H1 (cell line): ENCODE measurements at regions of chr5 and their contacts with region 1.

Region 1: GRCh38 chr5:170434966-170435605 is 45.9 kb upstream of the KCNMB1 start:
- DNase-seq: peak; percentile 54 to 92
- H3K4me3 ChIP-seq: no peak overlapping the region
- H3K27ac ChIP-seq: no peak overlapping the region
- H3K4me1 ChIP-seq: peaks cover 0 to 17% (median 9%) of the 10 kb centered on the region in 4 experiments; a peak in 6 of 7 replicates
- H3K27me3 ChIP-seq: no peaks in the 10 kb centered on the region; a peak in 1 of 7 replicates
- CTCF ChIP-seq: peak; percentile 91 to 97 (median 97)
- EP300 ChIP-seq: no peak
- POLR2A ChIP-seq: no peak
- RAD21 ChIP-seq: peak; percentile 95 to 99

Region 2: DNA sequence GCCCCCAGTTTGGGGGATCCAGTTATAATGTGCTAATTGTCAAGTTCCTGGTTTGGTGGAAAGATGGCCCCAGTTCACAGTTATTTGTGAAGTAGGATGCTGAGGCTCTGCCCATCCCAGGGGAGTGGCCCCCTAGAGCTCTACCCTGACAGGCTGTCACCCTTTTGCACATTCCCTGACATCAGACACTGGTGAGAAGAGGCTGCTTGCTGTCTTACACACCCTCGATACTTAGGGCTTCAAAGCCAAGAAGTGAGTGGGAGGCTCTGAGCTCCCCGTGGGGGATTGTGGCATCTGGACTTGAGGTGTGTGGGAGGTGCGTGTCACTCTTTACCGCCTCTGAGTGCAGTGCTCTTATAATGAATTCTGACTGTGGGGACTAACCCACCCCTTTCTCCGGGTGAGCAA is 629.6 kb before region 1 on chr5:
- CTCF ChIA-PET with region 1: no interaction called
- POLR2A ChIA-PET with region 1: no interaction called
- DNase-seq: no peak
- H3K4me3 ChIP-seq: no peak overlapping the region
- H3K27ac ChIP-seq: no peak overlapping the region
- H3K4me1 ChIP-seq: peaks cover 0 to 20% (median 14%) of the 10 kb centered on the region in 4 experiments; a peak in 6 of 7 replicates
- H3K27me3 ChIP-seq: peaks cover 0 to 2% (median 0%) of the 10 kb centered on the region in 4 experiments; a peak in 1 of 7 replicates
- CTCF ChIP-seq: no peak
- EP300 ChIP-seq: no peak
- POLR2A ChIP-seq: no peak
- RAD21 ChIP-seq: no peak

Region 3: DNA sequence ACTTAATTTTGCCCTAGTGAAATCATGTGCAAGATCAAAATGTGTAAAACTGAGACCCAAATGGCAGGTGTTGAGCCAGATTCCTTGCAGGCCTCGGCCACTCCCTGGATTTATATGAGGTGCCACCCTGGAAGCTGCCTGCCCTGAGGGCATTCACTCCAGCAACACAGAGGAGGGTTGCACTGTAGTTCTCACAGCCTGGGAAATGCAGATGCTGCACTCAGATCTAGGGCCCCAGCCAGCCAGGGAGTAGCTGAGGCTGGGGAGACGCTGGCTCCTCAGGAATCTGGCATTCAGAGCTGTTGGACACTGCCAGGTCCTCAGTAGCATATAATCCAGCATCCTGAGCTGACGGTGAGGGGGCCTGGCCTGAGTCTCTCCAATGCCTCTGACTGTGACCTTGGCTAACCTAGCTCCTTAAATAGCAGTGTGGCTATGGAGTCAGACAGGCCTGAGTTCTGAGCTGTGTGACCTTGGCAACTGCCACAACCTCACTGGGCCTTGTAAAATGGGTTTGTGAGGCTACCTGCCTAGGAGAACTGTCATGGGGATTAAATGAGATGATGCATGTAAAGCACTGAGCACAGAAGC is 54.6 kb before region 1 on chr5:
- CTCF ChIA-PET with region 1: no interaction called
- POLR2A ChIA-PET with region 1: no interaction called
- DNase-seq: no peak
- H3K4me3 ChIP-seq: no peak overlapping the region
- H3K27ac ChIP-seq: no peak overlapping the region
- H3K4me1 ChIP-seq: no peaks in the 10 kb centered on the region
- H3K27me3 ChIP-seq: no peaks in the 10 kb centered on the region
- CTCF ChIP-seq: no peak
- EP300 ChIP-seq: no peak
- POLR2A ChIP-seq: no peak
- RAD21 ChIP-seq: no peak

Region 4: GRCh38 chr5:170475294-170476000 is 40.4 kb after region 1 on chr5:
- CTCF ChIA-PET with region 1: interaction called, 42 read pairs
- POLR2A ChIA-PET with region 1: no interaction called
- DNase-seq: no peak
- H3K4me3 ChIP-seq: no peak overlapping the region
- H3K27ac ChIP-seq: no peak overlapping the region
- H3K4me1 ChIP-seq: peaks cover 2 to 5% (median 3%) of the 10 kb centered on the region in 4 experiments; a peak in 5 of 7 replicates
- H3K27me3 ChIP-seq: no peaks in the 10 kb centered on the region; a peak in 1 of 7 replicates
- CTCF ChIP-seq: no peak
- EP300 ChIP-seq: no peak
- POLR2A ChIP-seq: no peak
- RAD21 ChIP-seq: no peak

Region 5: DNA sequence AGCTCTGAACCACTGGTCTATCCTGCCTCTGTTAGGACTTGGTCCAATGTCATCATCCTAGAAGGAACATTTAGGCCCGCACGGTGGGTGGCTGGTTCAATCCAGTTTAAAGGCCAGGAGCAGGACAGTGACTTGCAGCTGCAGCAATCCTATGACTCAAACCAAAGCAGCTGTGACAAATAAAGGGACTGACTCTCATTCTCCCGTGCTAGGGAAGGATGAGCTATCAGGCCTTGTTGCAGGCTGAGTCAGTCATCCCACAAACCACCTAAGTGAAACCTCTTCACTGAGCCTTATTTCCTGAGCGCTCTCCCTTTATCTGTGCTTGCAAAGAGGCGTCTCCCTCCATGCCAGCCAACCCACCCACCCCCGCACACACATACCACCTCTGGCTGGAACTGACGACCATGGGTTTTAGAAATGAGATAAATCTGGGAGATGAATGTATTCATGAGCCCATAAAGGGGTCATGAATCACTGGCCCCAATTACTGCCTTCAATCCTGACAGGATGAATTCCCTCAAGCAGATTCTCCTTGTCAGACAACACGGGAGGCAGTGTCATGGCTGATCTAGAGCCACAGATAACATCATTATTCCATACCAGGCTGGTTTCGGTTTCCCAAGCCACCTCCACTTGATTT is 162.1 kb after region 1 on chr5:
- CTCF ChIA-PET with region 1: interaction called, 22 read pairs
- POLR2A ChIA-PET with region 1: no interaction called
- DNase-seq: no peak
- H3K4me3 ChIP-seq: no peak overlapping the region
- H3K27ac ChIP-seq: no peak overlapping the region
- H3K4me1 ChIP-seq: peaks cover 0 to 2% (median 0%) of the 10 kb centered on the region in 4 experiments; a peak in 1 of 7 replicates
- H3K27me3 ChIP-seq: no peaks in the 10 kb centered on the region; a peak in 1 of 7 replicates
- CTCF ChIP-seq: no peak
- EP300 ChIP-seq: no peak
- POLR2A ChIP-seq: no peak
- RAD21 ChIP-seq: no peak

Region 6: DNA sequence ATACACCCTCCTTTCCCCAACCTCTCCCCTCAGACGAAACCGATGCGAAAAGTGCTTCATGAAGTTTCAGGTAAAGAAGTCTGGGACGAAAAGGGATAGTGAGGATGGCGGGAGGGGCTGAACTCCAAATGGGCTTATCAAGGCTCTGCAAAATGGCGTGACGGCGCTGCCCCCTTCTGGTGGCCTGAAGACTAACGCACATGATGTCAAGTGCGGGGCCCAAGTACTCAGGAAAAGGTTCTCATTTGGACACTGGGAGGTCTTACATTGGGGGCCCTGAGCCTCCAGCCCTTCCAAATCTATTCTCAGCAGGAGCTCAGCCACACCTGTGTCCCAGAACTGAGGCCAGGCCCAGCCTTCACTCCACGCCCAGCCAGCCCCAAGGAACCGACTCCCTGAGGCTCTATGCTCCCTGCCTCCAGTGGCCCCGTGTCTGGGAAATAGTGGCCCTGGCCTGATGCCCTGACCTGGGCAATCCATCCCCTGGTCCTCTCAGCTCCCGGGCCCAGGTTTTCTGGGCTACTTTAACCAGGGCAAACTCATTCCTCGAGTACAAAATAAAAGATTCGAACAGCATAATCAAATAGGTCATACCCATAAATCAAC is 188.6 kb after region 1 on chr5:
- CTCF ChIA-PET with region 1: interaction called, 160 read pairs
- POLR2A ChIA-PET with region 1: no interaction called
- DNase-seq: peak in 1 of 2 experiments; percentile 79
- H3K4me3 ChIP-seq: no peak overlapping the region
- H3K27ac ChIP-seq: no peak overlapping the region
- H3K4me1 ChIP-seq: peaks cover 0 to 10% (median 3%) of the 10 kb centered on the region in 4 experiments; a peak in 6 of 7 replicates
- H3K27me3 ChIP-seq: no peaks in the 10 kb centered on the region; a peak in 2 of 7 replicates
- CTCF ChIP-seq: peak in 2 of 3 experiments; percentile 93; a peak in 3 of 4 replicates
- EP300 ChIP-seq: no peak
- POLR2A ChIP-seq: no peak
- RAD21 ChIP-seq: peak; percentile 96 to 98